ENCODE measurements at regions of chr17 and their contacts with region 1.

Region 1: GRCh38 chr17:4004517-4005295 is 40.5 kb upstream of the ATP2A3 start:
- DNase-seq: peak in 1 of 2 donors; percentile 50
- H3K4me3 ChIP-seq: no peak overlapping the region
- H3K27ac ChIP-seq: no peak overlapping the region
- H3K4me1 ChIP-seq: no peaks in the 10 kb centered on the region
- H3K27me3 ChIP-seq: no peaks in the 10 kb centered on the region
- CTCF ChIP-seq: peak; percentile 81 to 93 (median 86)
- POLR2A ChIP-seq: no peak

Region 2: GRCh38 chr17:3859940-3860339 is 144.8 kb before region 1 on chr17:
- intact Hi-C with region 1: loop called (anchors 5 kb)
- DNase-seq: no peak
- H3K4me3 ChIP-seq: no peak overlapping the region
- H3K27ac ChIP-seq: no peak overlapping the region
- H3K4me1 ChIP-seq: no peaks in the 10 kb centered on the region
- H3K27me3 ChIP-seq: no peaks in the 10 kb centered on the region
- CTCF ChIP-seq: no peak
- POLR2A ChIP-seq: no peak

Region 3: DNA sequence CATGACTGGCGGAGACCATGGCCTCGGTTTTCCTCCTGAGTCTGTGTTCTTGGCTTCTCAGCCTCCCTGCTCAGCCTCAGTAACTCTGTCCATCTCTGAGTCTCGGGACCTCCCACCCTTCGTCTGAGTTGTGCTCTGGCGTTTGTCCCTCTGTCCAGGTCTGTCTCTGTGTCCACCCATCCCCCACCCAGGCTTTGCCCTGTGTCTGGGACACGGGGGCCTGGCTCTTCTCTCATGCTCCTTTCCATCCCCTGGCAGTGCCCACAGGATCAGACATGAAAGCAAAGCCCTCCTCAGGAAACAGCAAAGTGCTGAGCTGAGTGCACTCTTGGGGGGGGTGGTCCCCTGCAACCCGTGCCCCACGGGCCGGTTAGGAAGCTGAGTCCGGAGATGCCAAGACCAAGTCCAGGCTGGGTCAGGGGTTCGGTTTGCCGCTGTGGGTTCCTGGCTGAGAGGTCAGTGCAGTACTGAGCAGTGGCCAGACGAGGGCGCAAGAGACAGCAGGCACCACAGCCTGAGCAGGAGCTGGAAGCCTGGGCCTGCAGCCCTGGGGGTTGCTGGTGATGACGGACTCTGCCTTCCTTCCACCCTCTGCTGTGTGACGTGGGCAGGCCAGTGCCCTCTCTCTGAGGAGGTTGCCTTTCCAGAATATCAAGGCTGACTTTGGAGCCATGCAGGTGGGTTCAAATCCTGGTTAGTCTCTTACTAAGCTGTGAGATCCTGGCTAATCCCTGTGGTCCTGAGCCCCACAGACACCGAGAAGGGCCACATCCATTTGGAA is 91.0 kb before region 1 on chr17:
- intact Hi-C with region 1: loop called (anchors 2 kb)
- DNase-seq: peak; percentile 70 to 71
- H3K4me3 ChIP-seq: no peak overlapping the region
- H3K27ac ChIP-seq: peak overlapping the region in 1 of 2 donors; percentile 25
- H3K4me1 ChIP-seq: no peaks in the 10 kb centered on the region
- H3K27me3 ChIP-seq: no peaks in the 10 kb centered on the region
- CTCF ChIP-seq: peak; percentile 88 to 96 (median 93)
- POLR2A ChIP-seq: no peak